ENCODE measurements at regions of chr1 and their contacts with region 1.

Region 1: DNA sequence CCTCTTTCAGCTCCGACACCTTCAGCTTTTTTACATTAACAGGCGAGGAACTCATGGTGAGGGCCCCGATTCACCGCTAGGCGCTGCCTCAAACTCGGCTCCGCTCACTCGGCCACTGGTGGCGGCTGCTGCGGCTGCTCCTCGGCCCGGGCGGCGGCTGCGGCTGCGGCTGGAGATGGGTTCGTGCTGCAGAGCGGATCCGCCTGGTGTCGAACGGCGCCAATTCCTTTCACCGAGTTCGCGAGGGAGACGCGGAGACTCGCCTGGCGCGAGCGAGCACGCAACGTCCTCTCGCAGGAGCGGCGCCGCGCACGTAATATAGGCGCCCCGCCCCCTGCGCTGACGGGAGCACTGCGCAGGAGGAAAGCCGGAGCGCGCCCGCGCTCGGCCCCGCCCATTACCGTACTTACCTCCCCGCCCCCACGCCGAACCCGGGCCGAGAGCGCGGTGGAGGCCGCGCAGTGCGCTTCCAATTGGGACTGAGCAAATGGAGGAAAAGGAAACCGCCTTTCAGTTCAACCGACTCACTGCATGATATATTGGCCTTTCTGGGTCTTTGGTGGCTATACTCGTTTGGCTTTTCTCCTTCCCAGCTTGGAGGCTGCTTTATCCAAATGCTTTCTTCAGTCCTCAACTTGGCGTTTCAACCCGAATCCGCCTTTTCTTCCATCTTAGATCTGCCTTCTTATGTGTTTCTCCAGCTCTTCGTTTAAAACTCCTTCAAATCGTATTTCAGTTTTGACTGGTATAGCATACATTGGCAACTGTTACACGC is at the start of gene HNRNPU:
- DNase-seq: peak; percentile 98
- H3K4me3 ChIP-seq: peak within 1 kb of the TSS; percentile 87 to 96 (median 94)
- H3K27ac ChIP-seq: peak within 1 kb of the TSS; percentile 89
- H3K4me1 ChIP-seq: peaks cover 30% of the 10 kb centered on the region
- H3K27me3 ChIP-seq: no peaks in the 10 kb centered on the region
- CTCF ChIP-seq: peak; percentile 26 to 33
- POLR2A ChIP-seq: peak; percentile 96
- total RNA-seq, gene HNRNPU: 398 and 417 TPM in 2 replicates

Region 2: DNA sequence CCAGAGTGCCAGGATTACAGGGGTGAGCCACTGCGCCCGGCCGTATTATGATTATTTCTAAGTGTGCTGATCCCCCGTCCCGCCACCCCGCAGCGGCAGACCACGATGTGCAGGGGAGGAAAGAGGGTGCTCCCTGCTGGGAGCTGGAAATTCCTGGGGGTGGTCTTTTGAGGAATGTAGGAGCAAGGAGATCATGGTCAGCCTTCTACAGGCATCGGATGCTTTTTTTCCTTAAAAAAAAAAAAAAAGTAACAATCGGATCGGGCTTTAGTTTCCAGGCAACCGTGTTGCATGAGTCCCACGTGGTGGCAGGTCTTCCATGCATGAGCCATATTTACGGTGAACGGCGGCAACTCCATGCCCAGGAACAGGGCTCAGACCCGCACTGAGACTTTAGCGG is 103.2 kb before region 1 on chr1:
- CTCF ChIA-PET with region 1: no interaction called
- POLR2A ChIA-PET with region 1: no interaction called
- dilution Hi-C with region 1: no loop called
- intact Hi-C with region 1: no loop called
- DNase-seq: no peak
- H3K4me3 ChIP-seq: no peak overlapping the region
- H3K27ac ChIP-seq: no peak overlapping the region
- H3K4me1 ChIP-seq: no peaks in the 10 kb centered on the region
- H3K27me3 ChIP-seq: no peaks in the 10 kb centered on the region
- CTCF ChIP-seq: no peak
- POLR2A ChIP-seq: no peak

Region 3: GRCh38 chr1:244896550-244896949 is 32.1 kb after region 1 on chr1:
- CTCF ChIA-PET with region 1: no interaction called
- POLR2A ChIA-PET with region 1: no interaction called
- dilution Hi-C with region 1: no loop called
- intact Hi-C with region 1: loop called (anchors 1 kb)
- DNase-seq: peak; percentile 86
- H3K4me3 ChIP-seq: no peak overlapping the region
- H3K27ac ChIP-seq: peak overlapping the region; percentile 57
- H3K4me1 ChIP-seq: peaks cover 6% of the 10 kb centered on the region
- H3K27me3 ChIP-seq: no peaks in the 10 kb centered on the region
- CTCF ChIP-seq: no peak
- POLR2A ChIP-seq: no peak

Region 4: DNA sequence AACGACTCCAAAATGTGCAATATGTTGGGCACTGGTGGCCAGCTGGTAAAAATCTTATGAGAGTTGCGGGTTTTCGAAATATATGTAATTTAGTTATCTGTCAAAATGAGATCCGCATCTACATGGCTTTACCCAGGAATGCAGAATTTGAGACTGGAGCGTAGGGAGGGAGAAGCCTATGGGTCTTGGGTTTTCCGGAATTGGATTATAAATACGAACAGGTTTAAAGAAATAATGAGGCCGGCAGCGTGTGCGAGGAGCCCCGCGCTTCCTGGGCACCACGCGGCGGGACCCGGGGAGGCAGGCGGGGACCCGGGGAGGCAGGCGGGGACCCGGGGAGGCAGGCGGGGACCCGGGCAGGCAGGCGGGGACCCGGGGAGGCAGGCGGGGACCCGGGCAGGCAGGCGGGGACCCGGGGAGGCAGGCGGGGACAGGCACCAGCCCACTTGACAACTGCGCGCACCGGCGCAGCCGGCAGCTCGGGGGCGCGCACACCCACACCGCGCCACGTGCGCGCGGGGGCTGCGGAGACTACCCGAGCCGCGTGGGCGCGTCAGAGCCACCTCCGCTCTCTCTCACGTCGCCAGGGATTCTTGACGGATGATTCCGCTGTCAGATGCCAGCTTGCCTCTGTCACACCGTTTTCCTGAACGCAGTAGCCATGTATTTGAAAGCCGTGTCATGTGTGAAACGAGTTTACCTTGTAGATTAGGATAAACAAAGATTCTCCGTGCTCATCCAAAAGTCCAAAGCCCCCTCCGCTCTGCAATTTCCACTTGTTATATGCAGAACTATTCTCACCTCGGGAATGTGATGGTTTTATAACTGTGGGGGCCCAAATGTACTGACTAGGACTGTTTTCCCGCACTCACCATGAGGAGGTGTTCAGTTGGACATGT is 54.2 kb after region 1 on chr1:
- CTCF ChIA-PET with region 1: interaction called, 4 read pairs
- POLR2A ChIA-PET with region 1: no interaction called
- dilution Hi-C with region 1: no loop called
- intact Hi-C with region 1: loop called (anchors 2 kb)
- DNase-seq: peak; percentile 38
- H3K4me3 ChIP-seq: peak overlapping the region; percentile 52 to 64 (median 63)
- H3K27ac ChIP-seq: no peak overlapping the region
- H3K4me1 ChIP-seq: peaks cover 12% of the 10 kb centered on the region
- H3K27me3 ChIP-seq: no peaks in the 10 kb centered on the region
- CTCF ChIP-seq: no peak
- POLR2A ChIP-seq: no peak

Region 5: GRCh38 chr1:244964112-244964971 is 99.9 kb after region 1 on chr1:
- CTCF ChIA-PET with region 1: interaction called, 41 read pairs
- POLR2A ChIA-PET with region 1: interaction called, 8 read pairs
- dilution Hi-C with region 1: no loop called
- intact Hi-C with region 1: loop called (anchors 1 kb)
- DNase-seq: peak; percentile 82
- H3K4me3 ChIP-seq: peak overlapping the region in 1 of 3 experiments; percentile 15
- H3K27ac ChIP-seq: peak overlapping the region; percentile 95
- H3K4me1 ChIP-seq: peaks cover 34% of the 10 kb centered on the region
- H3K27me3 ChIP-seq: no peaks in the 10 kb centered on the region
- CTCF ChIP-seq: no peak
- POLR2A ChIP-seq: peak; percentile 49

Region 6: DNA sequence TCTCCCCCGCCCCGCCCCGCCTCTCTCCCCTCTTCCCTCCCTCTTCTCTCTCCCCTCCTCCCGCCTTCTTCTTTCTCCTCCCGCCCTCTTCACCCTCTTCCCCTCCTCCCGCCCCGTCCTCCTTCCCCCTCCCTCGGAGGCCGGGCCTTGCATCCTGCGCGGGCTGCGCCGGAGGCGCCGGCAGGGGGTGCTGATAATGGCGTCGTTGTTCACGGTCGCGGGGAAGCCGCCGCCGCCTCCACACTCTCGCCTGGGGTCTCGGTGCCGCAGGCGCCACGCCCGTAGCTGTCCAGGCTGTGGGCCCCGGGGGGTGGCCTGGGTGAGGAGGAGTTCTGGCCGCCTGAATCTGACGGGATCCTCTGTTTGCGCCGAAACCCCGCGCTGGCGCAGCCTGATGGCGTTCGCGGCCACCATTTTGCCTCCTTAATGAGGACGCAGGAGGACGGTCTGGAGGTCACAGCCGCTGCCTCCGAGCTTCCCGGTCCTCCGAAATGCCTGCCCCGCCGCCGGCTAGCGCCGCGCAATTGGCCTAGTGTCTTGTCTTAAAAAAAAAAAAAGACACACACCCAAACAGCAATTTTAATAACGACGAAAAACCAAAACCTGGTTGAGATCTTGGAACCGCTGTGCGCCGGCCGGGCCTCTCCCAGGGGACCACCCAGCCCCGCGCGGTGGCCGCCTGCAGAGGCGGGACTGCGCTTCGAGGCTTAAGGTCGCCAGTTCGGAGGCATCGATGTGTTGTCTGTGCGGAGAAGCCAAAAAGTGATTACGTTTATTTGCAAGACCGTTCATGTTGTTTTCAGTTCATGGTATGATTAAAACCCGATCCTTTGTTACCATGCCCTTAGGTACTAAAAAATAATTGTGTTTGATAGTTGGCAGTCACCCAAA is 106.5 kb after region 1 on chr1:
- CTCF ChIA-PET with region 1: interaction called, 41 read pairs
- POLR2A ChIA-PET with region 1: interaction called, 4 read pairs
- dilution Hi-C with region 1: no loop called
- intact Hi-C with region 1: loop called (anchors 1 kb)
- DNase-seq: peak; percentile 94
- H3K4me3 ChIP-seq: peak overlapping the region; percentile 37 to 86 (median 80)
- H3K27ac ChIP-seq: peak overlapping the region; percentile 96
- H3K4me1 ChIP-seq: peaks cover 15% of the 10 kb centered on the region
- H3K27me3 ChIP-seq: no peaks in the 10 kb centered on the region
- CTCF ChIP-seq: peak; percentile 47 to 77
- POLR2A ChIP-seq: peak; percentile 86

Measured in endothelial cell of umbilical vein (primary cell).